ENCODE measurements at regions of chr6 and their contacts with region 1.

Region 1: DNA sequence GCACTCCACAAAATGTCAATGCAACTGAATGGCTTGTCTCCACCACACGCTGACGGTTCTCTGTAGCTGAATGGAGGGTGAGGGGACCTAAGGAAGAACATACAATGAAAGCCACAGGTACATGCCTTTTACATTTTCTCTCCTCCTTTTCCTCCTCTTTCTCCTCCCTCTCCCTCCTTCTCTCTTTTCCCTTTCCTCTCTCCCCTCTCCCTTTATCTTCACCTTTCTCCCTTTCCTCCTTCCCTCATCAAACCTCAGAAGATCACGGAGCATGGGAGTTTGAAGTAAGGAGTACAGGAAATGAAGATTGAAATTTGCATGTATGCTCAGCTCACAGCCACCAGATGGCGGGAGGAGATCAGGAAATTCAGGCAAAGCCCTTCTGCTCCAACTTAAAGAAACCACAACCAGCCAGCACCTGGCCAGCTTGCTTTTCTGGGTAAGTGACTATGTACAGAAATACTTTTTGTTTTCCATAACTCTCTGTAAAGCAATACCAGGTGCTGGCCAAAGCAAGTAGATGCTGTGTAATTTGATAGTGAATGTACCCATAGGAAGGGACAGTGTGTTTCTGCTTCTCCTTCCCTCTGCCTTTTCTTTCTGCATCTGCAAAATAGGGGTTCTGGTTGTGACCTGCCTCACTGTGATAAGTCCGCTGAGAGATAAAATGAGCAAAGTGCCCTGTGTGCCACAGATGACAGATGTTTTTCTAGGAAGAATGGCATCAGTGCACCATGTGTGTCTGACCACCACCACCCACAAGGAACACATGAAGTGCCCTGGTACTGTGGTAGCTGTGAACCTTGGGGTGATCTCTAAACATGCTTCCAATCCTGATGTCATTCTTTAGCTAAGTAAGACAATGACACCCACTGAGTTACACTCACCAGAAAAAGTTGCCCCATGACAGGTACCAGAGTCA is 18.6 kb upstream of the FOXO3 start:
- DNase-seq: peak; percentile 84

Region 2: GRCh38 chr6:108835218-108835850 is 293.2 kb after region 1 on chr6:
- intact Hi-C with region 1: loop called (anchors 2 to 5 kb)
- DNase-seq: peak; percentile 96

Region 3: GRCh38 chr6:108896111-108896661 is 354.1 kb after region 1 on chr6:
- intact Hi-C with region 1: loop called (anchors 5 kb)
- DNase-seq: no peak

Region 4: DNA sequence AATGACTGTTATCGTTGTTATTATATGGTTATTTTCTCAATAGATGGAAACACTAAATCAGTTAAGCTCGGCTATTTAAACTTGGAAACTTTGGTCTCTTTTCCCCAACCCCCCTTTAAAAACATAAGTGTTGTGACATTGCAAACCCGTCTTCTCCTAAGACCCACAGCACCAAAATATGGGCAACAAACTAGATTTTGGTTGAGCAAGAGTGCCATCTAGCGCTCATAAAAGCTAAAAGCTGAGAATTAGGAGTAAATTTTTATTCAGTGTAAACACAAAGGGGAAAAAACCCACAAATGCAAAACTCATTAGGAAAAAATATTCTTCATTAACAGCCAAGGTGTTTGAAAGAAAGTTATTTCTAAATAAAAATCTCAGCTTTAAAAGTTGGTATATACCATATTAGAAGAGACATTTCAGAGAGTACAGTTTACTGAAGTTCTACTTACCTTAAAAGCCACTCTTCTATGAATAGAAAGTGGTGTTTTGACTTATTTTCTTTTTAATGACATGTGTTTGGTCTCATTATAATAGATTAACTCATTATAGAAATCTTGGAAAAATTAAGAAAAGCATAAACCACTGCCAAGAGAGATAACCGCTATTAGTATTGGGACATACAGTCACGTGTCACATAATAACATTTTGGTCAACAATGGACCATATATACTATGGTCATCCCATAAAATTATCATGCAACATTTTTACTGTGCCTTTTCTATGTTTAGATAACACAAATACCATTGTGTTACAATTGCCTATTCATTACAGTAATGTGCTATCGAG is 531.4 kb after region 1 on chr6:
- intact Hi-C with region 1: loop called (anchors 5 kb)
- DNase-seq: no peak